CD4-positive, alpha-beta memory T cell (primary cell): ENCODE measurements at regions of chr13 and their contacts with region 1.

Region 1: GRCh38 chr13:36346222-36347083 is at the start of gene SPART:
- DNase-seq: peak; percentile 88 to 91 (median 89)
- H3K4me3 ChIP-seq: peak within 1 kb of the TSS; percentile 42 to 84
- H3K4me3 Mint-ChIP-seq: peak within 1 kb of the TSS; percentile 89 to 98 (median 96)
- H3K27ac ChIP-seq: peak within 1 kb of the TSS; percentile 85
- H3K27ac Mint-ChIP-seq: peak within 1 kb of the TSS; percentile 98 to 100 (median 99)
- H3K4me1 ChIP-seq: peaks cover 33% of the 10 kb centered on the region
- H3K4me1 Mint-ChIP-seq: peaks cover 28 to 44% (median 39%) of the 10 kb centered on the region in 4 donors
- H3K27me3 ChIP-seq: no peaks in the 10 kb centered on the region
- H3K27me3 Mint-ChIP-seq: peaks cover 4 to 5% of the 10 kb centered on the region in 2 donors
- total RNA-seq, gene SPART: 62.4 to 67.0 TPM

Region 2: GRCh38 chr13:36297366-36298338 is 48.8 kb before region 1 on chr13 and contains the start of gene CCDC169:
- CTCF ChIA-PET with region 1: no interaction called
- POLR2A ChIA-PET with region 1: no interaction called
- intact Hi-C with region 1: loop called (anchors 2 kb)
- DNase-seq: peak; percentile 53 to 69 (median 59)
- H3K4me3 ChIP-seq: peak within 1 kb of the TSS in 1 of 2 donors; percentile 54
- H3K4me3 Mint-ChIP-seq: peak within 1 kb of the TSS; percentile 81 to 90 (median 86)
- H3K27ac ChIP-seq: no peak within 1 kb of the TSS
- H3K27ac Mint-ChIP-seq: peak within 1 kb of the TSS in 6 of 7 donors; percentile 70 to 87 (median 77)
- H3K4me1 ChIP-seq: peaks cover 8% of the 10 kb centered on the region
- H3K4me1 Mint-ChIP-seq: peaks cover 6 to 22% (median 13%) of the 10 kb centered on the region in 4 donors
- H3K27me3 ChIP-seq: no peaks in the 10 kb centered on the region
- H3K27me3 Mint-ChIP-seq: peaks cover 3 to 20% of the 10 kb centered on the region in 2 donors
- total RNA-seq, gene CCDC169: not detected

Region 3: DNA sequence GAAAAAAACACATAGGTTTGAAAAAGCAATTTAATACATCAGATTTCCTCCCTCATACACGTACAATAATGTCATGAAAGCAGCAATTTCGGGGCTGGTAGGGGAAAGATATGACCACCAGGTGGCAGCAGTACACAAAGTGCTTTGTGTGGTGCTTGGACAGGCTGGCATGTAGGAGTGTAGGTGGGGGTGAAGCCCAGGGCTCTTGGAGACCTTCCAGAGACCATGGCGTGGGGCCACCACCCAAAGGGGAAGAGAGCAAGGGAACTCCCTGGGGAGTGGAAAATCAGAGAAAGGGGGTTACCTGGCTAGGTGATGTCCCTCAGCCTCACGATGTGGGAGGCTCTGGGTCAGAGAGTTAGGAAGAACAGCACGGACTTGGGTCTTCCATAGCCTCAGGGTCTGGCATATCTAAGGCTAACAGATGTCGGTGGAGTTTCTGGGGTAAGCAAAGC is 74.0 kb after region 1 on chr13:
- CTCF ChIA-PET with region 1: interaction called, 3 read pairs
- POLR2A ChIA-PET with region 1: no interaction called
- intact Hi-C with region 1: loop called (anchors 2 kb)
- DNase-seq: peak; percentile 34 to 45 (median 41)
- H3K4me3 ChIP-seq: no peak overlapping the region
- H3K4me3 Mint-ChIP-seq: no peak overlapping the region
- H3K27ac ChIP-seq: no peak overlapping the region
- H3K27ac Mint-ChIP-seq: no peak overlapping the region
- H3K4me1 ChIP-seq: no peaks in the 10 kb centered on the region
- H3K4me1 Mint-ChIP-seq: peaks cover 0 to 8% (median 3%) of the 10 kb centered on the region in 4 donors
- H3K27me3 ChIP-seq: no peaks in the 10 kb centered on the region
- H3K27me3 Mint-ChIP-seq: peaks cover 25 to 30% of the 10 kb centered on the region in 2 donors

Region 4: GRCh38 chr13:36736119-36736726 is 389.8 kb after region 1 on chr13:
- CTCF ChIA-PET with region 1: interaction called, 37 read pairs
- POLR2A ChIA-PET with region 1: no interaction called
- intact Hi-C with region 1: no loop called
- DNase-seq: peak; percentile 10 to 39 (median 22)
- H3K4me3 ChIP-seq: no peak overlapping the region
- H3K4me3 Mint-ChIP-seq: no peak overlapping the region
- H3K27ac ChIP-seq: no peak overlapping the region
- H3K27ac Mint-ChIP-seq: no peak overlapping the region
- H3K4me1 ChIP-seq: no peaks in the 10 kb centered on the region
- H3K4me1 Mint-ChIP-seq: no peaks in the 10 kb centered on the region
- H3K27me3 ChIP-seq: no peaks in the 10 kb centered on the region
- H3K27me3 Mint-ChIP-seq: peaks cover 2 to 4% of the 10 kb centered on the region in 2 donors

Region 5: DNA sequence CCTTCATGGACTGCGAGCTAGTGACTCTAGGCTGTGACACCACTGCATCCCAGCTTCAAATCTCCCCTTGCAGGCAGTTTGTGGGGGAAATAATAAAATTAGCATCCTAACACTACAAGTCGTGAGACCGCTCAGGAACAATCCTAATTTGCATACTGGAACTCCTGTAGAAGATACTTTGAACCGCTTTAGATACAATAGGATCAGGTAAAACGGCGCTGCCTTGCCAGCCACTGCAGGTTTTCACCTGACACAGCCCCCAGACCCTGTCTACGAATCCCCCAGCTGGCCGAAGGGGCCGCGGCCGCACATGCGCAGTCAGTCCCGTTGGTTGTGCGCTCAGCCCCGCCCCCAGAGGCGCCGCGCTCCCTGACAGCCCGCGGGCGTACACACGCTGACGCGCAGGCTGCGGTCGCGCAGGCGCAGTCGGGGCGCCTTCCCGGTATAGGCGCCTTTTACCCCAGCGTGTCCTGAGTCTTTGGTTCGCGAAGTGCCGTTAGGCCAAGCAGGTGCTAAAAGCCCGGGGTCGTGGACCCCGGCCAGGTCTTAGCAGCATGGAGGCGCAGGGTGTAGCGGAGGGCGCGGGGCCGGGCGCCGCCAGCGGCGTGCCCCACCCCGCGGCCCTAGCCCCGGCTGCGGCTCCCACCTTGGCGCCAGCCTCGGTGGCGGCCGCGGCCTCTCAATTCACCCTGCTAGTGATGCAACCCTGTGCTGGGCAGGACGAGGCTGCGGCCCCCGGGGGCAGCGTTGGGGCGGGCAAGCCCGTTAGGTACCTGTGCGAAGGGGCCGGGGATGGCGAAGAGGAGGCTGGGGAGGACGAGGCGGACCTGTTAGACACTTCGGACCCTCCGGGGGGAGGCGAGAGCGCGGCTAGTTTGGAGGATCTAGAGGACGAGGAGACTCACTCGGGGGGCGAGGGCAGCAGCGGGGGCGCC is 472.6 kb after region 1 on chr13 and contains the start of gene RFXAP:
- CTCF ChIA-PET with region 1: no interaction called
- POLR2A ChIA-PET with region 1: no interaction called
- intact Hi-C with region 1: loop called (anchors 1 kb)
- DNase-seq: peak; percentile 87 to 92 (median 90)
- H3K4me3 ChIP-seq: peak within 1 kb of the TSS; percentile 76 to 86
- H3K4me3 Mint-ChIP-seq: peak within 1 kb of the TSS; percentile 91 to 97 (median 95)
- H3K27ac ChIP-seq: peak within 1 kb of the TSS; percentile 85
- H3K27ac Mint-ChIP-seq: peak within 1 kb of the TSS; percentile 85 to 96 (median 95)
- H3K4me1 ChIP-seq: peaks cover 46% of the 10 kb centered on the region
- H3K4me1 Mint-ChIP-seq: peaks cover 33 to 56% (median 42%) of the 10 kb centered on the region in 4 donors
- H3K27me3 ChIP-seq: no peaks in the 10 kb centered on the region
- H3K27me3 Mint-ChIP-seq: peaks cover 0 to 8% of the 10 kb centered on the region in 2 donors
- total RNA-seq, gene RFXAP: 8.8 to 9.9 TPM

Region 6: GRCh38 chr13:37058910-37059847 is 712.7 kb after region 1 on chr13 and contains the start of gene SUPT20H:
- CTCF ChIA-PET with region 1: no interaction called
- POLR2A ChIA-PET with region 1: no interaction called
- intact Hi-C with region 1: loop called (anchors 1 kb)
- DNase-seq: peak; percentile 89 to 92 (median 90)
- H3K4me3 ChIP-seq: peak within 1 kb of the TSS; percentile 72 to 77
- H3K4me3 Mint-ChIP-seq: peak within 1 kb of the TSS; percentile 91 to 97 (median 96)
- H3K27ac ChIP-seq: peak within 1 kb of the TSS; percentile 95
- H3K27ac Mint-ChIP-seq: peak within 1 kb of the TSS; percentile 98 to 99 (median 99)
- H3K4me1 ChIP-seq: peaks cover 23% of the 10 kb centered on the region
- H3K4me1 Mint-ChIP-seq: peaks cover 14 to 56% (median 29%) of the 10 kb centered on the region in 4 donors
- H3K27me3 ChIP-seq: no peaks in the 10 kb centered on the region
- H3K27me3 Mint-ChIP-seq: no peaks in the 10 kb centered on the region
- total RNA-seq, gene SUPT20H: 104 to 105 TPM

Region 7: DNA sequence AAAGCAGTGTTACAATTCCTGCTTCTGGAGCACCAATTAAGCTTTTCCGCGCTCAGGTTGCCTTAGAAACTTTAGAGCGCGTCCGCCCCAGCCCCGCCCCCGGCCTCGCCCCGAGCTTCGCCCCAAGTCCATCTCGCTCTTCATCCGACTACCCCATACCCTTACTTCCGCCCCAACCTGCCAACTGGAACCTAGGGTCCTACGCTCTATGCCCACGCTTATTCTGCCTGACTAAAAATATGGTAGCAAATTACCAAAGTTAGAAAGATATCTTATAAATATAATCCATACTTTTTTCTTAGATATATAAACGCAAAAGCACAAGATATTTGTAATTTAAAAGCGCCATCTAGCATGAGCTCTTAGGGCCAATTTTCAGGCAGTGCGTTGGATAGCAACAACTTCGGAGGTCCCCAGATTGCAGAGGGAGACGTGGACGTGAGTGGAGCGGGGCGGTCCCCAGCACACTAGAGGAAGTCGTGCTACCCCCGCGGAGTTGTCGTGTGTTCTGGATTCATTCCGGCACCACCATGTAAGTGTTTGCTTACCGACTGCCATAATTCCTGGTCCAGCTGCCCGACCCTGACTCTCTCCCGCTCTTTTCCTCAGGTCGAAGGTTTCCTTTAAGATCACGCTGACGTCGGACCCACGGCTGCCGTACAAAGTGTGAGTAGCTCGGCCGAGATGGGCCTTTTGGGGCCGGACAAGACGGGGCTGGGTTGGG is 2003.1 kb after region 1 on chr13 and contains the start of gene UFM1:
- CTCF ChIA-PET with region 1: no interaction called
- POLR2A ChIA-PET with region 1: no interaction called
- intact Hi-C with region 1: loop called (anchors 5 kb)
- DNase-seq: peak; percentile 90 to 94 (median 92)
- H3K4me3 ChIP-seq: peak within 1 kb of the TSS; percentile 75 to 87
- H3K4me3 Mint-ChIP-seq: peak within 1 kb of the TSS; percentile 95 to 99 (median 98)
- H3K27ac ChIP-seq: peak within 1 kb of the TSS; percentile 90
- H3K27ac Mint-ChIP-seq: peak within 1 kb of the TSS; percentile 97 to 99 (median 98)
- H3K4me1 ChIP-seq: peaks cover 31% of the 10 kb centered on the region
- H3K4me1 Mint-ChIP-seq: peaks cover 26 to 42% (median 35%) of the 10 kb centered on the region in 4 donors
- H3K27me3 ChIP-seq: no peaks in the 10 kb centered on the region
- H3K27me3 Mint-ChIP-seq: peaks cover 0 to 2% of the 10 kb centered on the region in 2 donors
- total RNA-seq, gene UFM1: 81.8 to 82.1 TPM